ENCODE measurements at regions of chr22 and their contacts with region 1.

Region 1: GRCh38 chr22:29766632-29767170 is at the start of gene ZMAT5:
- DNase-seq: peak; percentile 91 to 94
- H3K4me3 ChIP-seq: peak within 1 kb of the TSS; percentile 93
- H3K27ac ChIP-seq: peak within 1 kb of the TSS; percentile 76
- H3K4me1 ChIP-seq: peaks cover 30% of the 10 kb centered on the region
- H3K27me3 ChIP-seq: no peaks in the 10 kb centered on the region
- CTCF ChIP-seq: no peak
- total RNA-seq, gene ZMAT5: 14.2 and 15.5 TPM in 2 replicates

Region 2: DNA sequence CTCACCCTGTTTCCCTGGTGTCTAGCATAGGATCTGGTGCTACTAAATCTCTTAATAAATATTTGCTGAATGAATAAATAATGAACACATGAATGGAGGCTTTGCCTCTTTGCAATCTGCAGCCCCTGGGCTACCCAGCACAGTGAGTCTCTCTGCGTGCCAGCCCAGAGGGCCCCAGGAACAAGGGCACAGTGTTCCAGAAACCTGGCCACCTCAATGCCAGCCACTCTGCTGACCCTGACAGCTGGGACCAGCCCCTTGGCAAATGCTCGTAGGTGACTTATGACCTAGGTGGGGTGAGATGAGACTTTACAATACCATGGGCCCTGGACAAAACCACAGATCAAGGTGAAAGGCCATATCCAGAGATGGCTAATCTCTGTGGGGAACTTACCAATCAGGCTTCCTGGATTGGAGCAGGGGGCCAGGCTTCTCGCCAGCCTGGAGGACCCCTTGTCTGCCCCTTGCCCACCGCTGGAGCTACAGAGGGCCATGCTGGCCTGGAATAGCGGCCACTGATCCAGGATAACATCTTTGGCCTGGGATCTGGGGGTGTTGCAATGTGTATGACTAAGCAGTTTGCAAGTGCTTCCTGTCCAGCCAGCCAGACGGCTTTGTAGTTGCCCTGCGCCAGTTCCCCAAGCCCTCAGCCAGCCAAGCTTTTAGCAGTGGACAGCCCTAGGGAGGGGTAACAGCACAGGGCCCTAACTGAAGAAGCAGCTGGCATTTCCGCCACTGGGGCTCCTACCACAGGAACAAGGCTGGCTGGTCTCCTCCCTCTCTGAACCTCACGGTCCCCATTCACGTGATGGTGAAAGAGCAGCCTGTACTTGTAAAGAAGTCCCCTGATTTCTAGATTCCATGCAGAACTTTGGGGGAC is 32.3 kb after region 1 on chr22:
- CTCF ChIA-PET with region 1: no interaction called
- POLR2A ChIA-PET with region 1: interaction called, 3 read pairs
- intact Hi-C with region 1: loop called (anchors 2 kb)
- DNase-seq: peak; percentile 90 to 98
- H3K4me3 ChIP-seq: peak overlapping the region; percentile 44; the same call in 1 of the 2 replicates
- H3K27ac ChIP-seq: peak overlapping the region; percentile 93
- H3K4me1 ChIP-seq: peaks cover 76% of the 10 kb centered on the region
- H3K27me3 ChIP-seq: no peaks in the 10 kb centered on the region
- CTCF ChIP-seq: no peak

Measured in PC-9 (cell line).